SK-N-SH (cell line): ENCODE measurements at regions of chr7 and their contacts with region 1.

Region 1: GRCh38 chr7:28520074-28521015 is 108.0 kb downstream of the CREB5 start:
- DNase-seq: no peak
- H3K4me3 ChIP-seq: no peak overlapping the region
- H3K27ac ChIP-seq: no peak overlapping the region
- H3K4me1 ChIP-seq: peaks cover 0 to 17% of the 10 kb centered on the region in 2 experiments; a peak in 2 of 4 replicates
- H3K27me3 ChIP-seq: no peaks in the 10 kb centered on the region
- CTCF ChIP-seq: no peak
- EP300 ChIP-seq: peak in 1 of 2 experiments; percentile 71; a peak in 2 of 4 replicates
- RAD21 ChIP-seq: peak; percentile 4; the same call in 1 of the 2 replicates

Region 2: DNA sequence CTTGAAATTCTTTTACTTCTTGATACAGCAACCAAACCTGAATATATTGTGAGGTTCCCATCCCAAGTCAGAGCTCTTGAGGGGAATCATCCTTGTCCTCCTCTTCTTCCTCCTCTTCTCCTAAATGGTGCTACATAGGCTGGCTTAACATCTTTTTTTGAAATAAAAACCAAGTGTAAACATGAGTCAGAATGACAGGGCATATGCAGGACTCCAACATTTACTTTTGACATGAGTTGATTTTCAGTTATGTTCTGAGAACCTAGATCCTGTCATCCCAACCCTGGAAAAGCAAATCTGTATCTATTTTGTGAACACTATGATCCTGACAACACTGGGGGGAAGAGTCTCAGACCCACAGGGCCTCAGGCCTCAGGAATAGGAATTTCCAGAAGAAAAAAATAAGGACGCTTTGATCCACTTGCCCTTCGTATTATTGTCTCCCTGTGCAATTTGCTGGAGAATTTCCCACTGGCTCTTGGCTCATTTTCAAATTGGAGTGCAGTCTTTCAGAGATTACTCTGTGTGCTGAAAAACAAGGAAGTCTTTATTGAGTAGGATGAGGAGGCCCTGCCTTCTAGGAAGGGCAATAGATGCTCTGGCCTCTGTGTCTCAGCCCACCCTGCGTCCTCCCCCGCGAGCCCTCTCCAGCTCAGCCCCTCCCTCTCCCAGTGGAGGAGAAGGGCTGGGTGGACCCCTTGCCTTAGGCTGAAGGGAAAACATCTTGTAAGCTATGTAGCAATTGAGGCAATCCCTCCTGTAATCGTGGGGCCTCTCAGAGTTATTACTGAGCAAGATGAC is 13.6 kb after region 1 on chr7:
- CTCF ChIA-PET with region 1: interaction called, 13 read pairs
- POLR2A ChIA-PET with region 1: no interaction called
- DNase-seq: no peak
- H3K4me3 ChIP-seq: no peak overlapping the region
- H3K27ac ChIP-seq: no peak overlapping the region
- H3K4me1 ChIP-seq: peaks cover 0 to 6% of the 10 kb centered on the region in 2 experiments; a peak in 1 of 4 replicates
- H3K27me3 ChIP-seq: no peaks in the 10 kb centered on the region
- CTCF ChIP-seq: no peak
- EP300 ChIP-seq: no peak
- RAD21 ChIP-seq: no peak